Caco-2 (cell line): ENCODE measurements at regions of chr7 and their contacts with region 1.

Region 1: DNA sequence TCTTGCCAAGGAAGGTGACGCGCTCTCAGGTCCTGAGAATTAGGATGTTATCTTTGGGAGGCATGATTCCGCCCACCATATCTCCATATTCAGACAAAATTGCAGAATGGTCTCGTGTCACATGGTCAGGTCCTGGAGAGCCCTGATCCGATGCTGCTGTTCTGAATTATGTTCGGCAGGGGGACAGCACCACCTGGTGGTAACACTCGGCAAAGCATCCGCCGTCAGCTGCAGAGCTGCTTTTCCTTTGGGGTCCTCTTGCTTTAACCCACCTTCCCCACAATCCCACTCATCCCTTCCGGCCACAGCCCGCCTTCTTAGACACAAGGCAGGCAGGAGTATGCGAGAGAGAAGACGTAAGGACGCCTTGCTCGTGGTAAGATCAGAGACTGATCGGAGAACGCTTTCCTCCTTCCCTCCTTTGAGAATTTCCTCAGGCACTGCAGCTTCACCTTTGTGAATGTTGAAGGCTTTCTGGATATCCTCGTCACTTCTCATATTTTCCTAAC is 327.8 kb upstream of the C7orf33 start:
- DNase-seq: peak; percentile 70 to 82
- H3K4me3 ChIP-seq: peak overlapping the region; percentile 21
- H3K4me3 Mint-ChIP-seq: peak overlapping the region; percentile 59
- H3K27ac Mint-ChIP-seq: peak overlapping the region; percentile 46
- H3K4me1 ChIP-seq: peaks cover 3% of the 10 kb centered on the region; the same call in 1 of the 2 replicates
- H3K4me1 Mint-ChIP-seq: peaks cover 16% of the 10 kb centered on the region
- H3K27me3 ChIP-seq: no peaks in the 10 kb centered on the region
- H3K27me3 Mint-ChIP-seq: no peaks in the 10 kb centered on the region
- CTCF ChIP-seq: peak; percentile 95 to 98

Region 2: GRCh38 chr7:148110111-148110868 is 152.5 kb before region 1 on chr7:
- CTCF ChIA-PET with region 1: no interaction called
- POLR2A ChIA-PET with region 1: no interaction called
- intact Hi-C with region 1: loop called (anchors 1 kb)
- DNase-seq: peak; percentile 61 to 75
- H3K4me3 ChIP-seq: no peak overlapping the region
- H3K4me3 Mint-ChIP-seq: no peak overlapping the region
- H3K27ac Mint-ChIP-seq: no peak overlapping the region
- H3K4me1 ChIP-seq: peaks cover 14% of the 10 kb centered on the region; the same call in 1 of the 2 replicates
- H3K4me1 Mint-ChIP-seq: no peaks in the 10 kb centered on the region
- H3K27me3 ChIP-seq: no peaks in the 10 kb centered on the region
- H3K27me3 Mint-ChIP-seq: no peaks in the 10 kb centered on the region
- CTCF ChIP-seq: peak; percentile 51 to 56

Region 3: DNA sequence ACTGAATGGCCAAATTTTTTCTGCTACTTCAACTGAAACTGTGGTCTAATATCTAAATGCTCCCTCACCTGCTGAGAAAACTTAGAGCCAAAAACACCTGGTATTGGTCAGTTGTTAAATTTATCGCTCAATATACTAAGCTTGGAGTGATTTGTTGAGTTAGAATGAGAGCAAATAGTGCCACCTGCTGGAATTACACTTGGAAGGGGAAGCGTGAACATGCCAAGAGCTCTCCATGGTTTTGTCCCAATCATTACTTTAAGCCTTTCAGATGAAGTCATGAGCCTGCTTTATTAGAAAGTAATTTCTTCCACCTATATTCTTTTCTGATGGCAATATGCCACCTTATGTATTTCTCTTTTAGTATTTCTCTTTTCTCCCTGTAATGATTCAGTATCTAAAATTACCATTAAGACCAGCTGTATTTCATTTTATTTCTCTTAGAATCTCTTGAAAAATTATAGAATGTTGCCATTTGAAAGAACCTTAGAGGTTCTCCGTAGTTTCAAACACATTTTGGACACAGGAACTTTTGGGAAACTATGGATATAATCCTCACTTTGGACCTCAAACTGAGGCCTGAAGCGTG is 120.0 kb before region 1 on chr7:
- CTCF ChIA-PET with region 1: no interaction called
- POLR2A ChIA-PET with region 1: no interaction called
- intact Hi-C with region 1: loop called (anchors 1 kb)
- DNase-seq: peak in 1 of 2 experiments; percentile 49
- H3K4me3 ChIP-seq: no peak overlapping the region
- H3K4me3 Mint-ChIP-seq: no peak overlapping the region
- H3K27ac Mint-ChIP-seq: no peak overlapping the region
- H3K4me1 ChIP-seq: no peaks in the 10 kb centered on the region
- H3K4me1 Mint-ChIP-seq: no peaks in the 10 kb centered on the region
- H3K27me3 ChIP-seq: no peaks in the 10 kb centered on the region
- H3K27me3 Mint-ChIP-seq: peaks cover 6% of the 10 kb centered on the region
- CTCF ChIP-seq: peak; percentile 68 to 69

Region 4: DNA sequence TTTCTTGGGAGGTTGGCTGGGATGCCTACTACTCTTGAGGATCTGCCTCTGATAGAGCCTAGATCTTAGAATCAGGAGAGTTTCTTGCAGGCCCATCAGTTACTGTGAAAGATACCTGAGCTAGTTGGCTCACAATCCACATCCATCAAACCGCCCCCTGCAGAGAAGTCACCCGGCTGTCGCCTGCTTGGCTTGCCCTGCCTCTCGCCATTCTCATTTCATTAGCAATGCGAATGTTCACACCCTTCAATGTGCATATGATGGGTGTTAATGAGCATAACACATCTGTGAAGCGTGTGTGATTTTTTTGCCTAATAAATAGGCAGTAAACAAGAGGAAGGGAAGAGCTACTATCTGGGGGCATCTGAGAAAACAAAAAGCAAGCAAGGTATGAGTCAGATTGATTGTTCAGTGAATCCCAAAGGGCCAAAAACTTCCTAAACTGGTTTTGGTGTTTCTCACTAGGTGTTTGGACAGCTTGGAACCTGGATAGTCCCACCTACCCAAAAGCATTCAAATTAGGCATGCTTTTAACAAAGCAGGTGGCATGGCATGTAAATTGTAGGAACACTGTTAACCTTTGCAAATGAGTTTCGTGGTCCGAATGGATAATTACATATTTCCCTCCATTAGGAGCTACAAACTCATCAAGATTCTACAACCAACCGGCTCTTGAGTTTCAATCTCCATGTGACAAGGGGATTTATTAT is 55.5 kb after region 1 on chr7:
- CTCF ChIA-PET with region 1: interaction called, 7 read pairs
- POLR2A ChIA-PET with region 1: no interaction called
- intact Hi-C with region 1: loop called (anchors 1 kb)
- DNase-seq: peak in 1 of 2 experiments; percentile 51
- H3K4me3 ChIP-seq: no peak overlapping the region
- H3K4me3 Mint-ChIP-seq: peak overlapping the region; percentile 28
- H3K27ac Mint-ChIP-seq: peak overlapping the region; percentile 58
- H3K4me1 ChIP-seq: peaks cover 24% of the 10 kb centered on the region
- H3K4me1 Mint-ChIP-seq: peaks cover 7% of the 10 kb centered on the region
- H3K27me3 ChIP-seq: no peaks in the 10 kb centered on the region
- H3K27me3 Mint-ChIP-seq: no peaks in the 10 kb centered on the region
- CTCF ChIP-seq: no peak

Region 5: GRCh38 chr7:148334959-148335577 is 72.3 kb after region 1 on chr7:
- CTCF ChIA-PET with region 1: interaction called, 10 read pairs
- POLR2A ChIA-PET with region 1: no interaction called
- intact Hi-C with region 1: loop called (anchors 1 kb)
- DNase-seq: no peak
- H3K4me3 ChIP-seq: no peak overlapping the region
- H3K4me3 Mint-ChIP-seq: no peak overlapping the region
- H3K27ac Mint-ChIP-seq: no peak overlapping the region
- H3K4me1 ChIP-seq: peaks cover 25% of the 10 kb centered on the region
- H3K4me1 Mint-ChIP-seq: peaks cover 27% of the 10 kb centered on the region
- H3K27me3 ChIP-seq: no peaks in the 10 kb centered on the region
- H3K27me3 Mint-ChIP-seq: no peaks in the 10 kb centered on the region
- CTCF ChIP-seq: no peak

Region 6: DNA sequence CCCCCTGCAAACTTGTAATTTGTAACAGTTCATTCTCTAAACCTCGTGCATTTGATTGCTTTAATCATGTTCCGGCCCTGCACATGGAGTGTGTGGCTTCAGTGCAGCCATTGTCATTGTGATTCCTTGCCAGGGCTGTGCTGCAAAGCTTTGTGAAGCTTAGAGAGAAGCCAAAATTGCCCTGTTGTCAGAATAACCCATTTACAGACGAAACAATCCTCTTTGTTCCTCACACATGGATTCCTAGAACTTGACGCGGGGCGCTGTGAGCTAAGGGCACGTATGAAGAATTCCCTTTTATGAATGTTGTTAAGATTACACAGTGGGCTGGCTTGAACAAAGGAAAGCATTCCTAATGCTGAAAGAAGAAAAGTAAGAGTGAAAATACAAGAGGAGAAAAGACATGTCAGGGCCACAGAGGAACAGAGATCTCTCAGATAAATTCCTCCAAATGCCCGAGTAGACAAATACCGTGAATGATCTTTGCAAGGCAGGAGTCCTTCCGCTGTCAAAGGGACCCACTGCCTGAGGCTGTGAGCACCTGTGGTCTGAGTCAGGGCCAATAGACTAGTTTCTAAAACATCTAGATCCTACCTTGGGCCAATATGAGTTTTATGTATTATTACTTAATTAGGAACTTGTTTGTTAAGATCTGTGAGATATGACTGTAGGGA is 122.4 kb after region 1 on chr7:
- CTCF ChIA-PET with region 1: no interaction called
- POLR2A ChIA-PET with region 1: no interaction called
- intact Hi-C with region 1: no loop called
- DNase-seq: no peak
- H3K4me3 ChIP-seq: no peak overlapping the region
- H3K4me3 Mint-ChIP-seq: no peak overlapping the region
- H3K27ac Mint-ChIP-seq: no peak overlapping the region
- H3K4me1 ChIP-seq: no peaks in the 10 kb centered on the region
- H3K4me1 Mint-ChIP-seq: no peaks in the 10 kb centered on the region
- H3K27me3 ChIP-seq: no peaks in the 10 kb centered on the region
- H3K27me3 Mint-ChIP-seq: no peaks in the 10 kb centered on the region
- CTCF ChIP-seq: no peak

Region 7: GRCh38 chr7:148480479-148481146 is 217.8 kb after region 1 on chr7:
- CTCF ChIA-PET with region 1: interaction called, 21 read pairs
- POLR2A ChIA-PET with region 1: no interaction called
- intact Hi-C with region 1: loop called (anchors 1 kb)
- DNase-seq: no peak
- H3K4me3 ChIP-seq: no peak overlapping the region
- H3K4me3 Mint-ChIP-seq: no peak overlapping the region
- H3K27ac Mint-ChIP-seq: peak overlapping the region; percentile 51
- H3K4me1 ChIP-seq: peaks cover 14% of the 10 kb centered on the region
- H3K4me1 Mint-ChIP-seq: peaks cover 36% of the 10 kb centered on the region
- H3K27me3 ChIP-seq: no peaks in the 10 kb centered on the region
- H3K27me3 Mint-ChIP-seq: no peaks in the 10 kb centered on the region
- CTCF ChIP-seq: peak in 1 of 2 experiments; percentile 30

Region 8: GRCh38 chr7:148485618-148486017 is 222.8 kb after region 1 on chr7:
- CTCF ChIA-PET with region 1: interaction called, 21 read pairs
- POLR2A ChIA-PET with region 1: no interaction called
- intact Hi-C with region 1: loop called (anchors 1 kb)
- DNase-seq: no peak
- H3K4me3 ChIP-seq: no peak overlapping the region
- H3K4me3 Mint-ChIP-seq: no peak overlapping the region
- H3K27ac Mint-ChIP-seq: no peak overlapping the region
- H3K4me1 ChIP-seq: peaks cover 14% of the 10 kb centered on the region
- H3K4me1 Mint-ChIP-seq: peaks cover 22% of the 10 kb centered on the region
- H3K27me3 ChIP-seq: no peaks in the 10 kb centered on the region
- H3K27me3 Mint-ChIP-seq: no peaks in the 10 kb centered on the region
- CTCF ChIP-seq: no peak